ENCODE measurements at regions of chr1 and their contacts with region 1.

Region 1: DNA sequence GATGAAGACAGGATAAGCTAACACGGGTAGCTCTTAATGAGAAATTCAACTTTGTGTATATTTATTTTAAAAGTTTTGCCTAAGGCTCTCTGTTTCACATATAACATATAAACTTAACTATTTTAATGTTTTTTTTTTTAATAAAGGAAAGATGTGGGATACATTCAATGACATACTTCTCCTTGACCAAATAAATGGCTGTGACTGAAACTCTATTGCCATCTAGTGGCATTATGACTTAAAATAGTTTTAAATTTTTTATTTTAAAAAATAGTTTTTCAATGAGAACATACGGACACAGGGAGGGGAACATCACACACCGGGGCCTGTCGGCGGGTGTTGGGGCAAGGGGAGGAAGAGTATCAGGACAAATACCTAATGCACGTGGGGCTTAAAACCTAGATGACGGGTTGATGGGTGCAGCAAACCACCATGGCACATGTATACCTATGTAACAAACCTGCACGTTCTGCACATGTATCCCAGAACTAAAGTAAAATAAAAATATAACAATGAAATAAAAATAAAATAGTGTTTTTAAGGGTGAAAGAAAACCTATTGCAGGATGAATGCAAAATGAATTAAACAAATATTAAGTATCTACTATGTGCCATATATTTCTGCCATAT is 83.4 kb downstream of the LYST start:
- DNase-seq: peak; percentile 9 to 52
- H3K4me3 ChIP-seq: no peak overlapping the region
- H3K27ac ChIP-seq: no peak overlapping the region
- H3K4me1 ChIP-seq: 0 out of 2 replicates have a peak, but pooled peaks cover 4% of the 10 kb centered on the region
- H3K27me3 ChIP-seq: no peaks in the 10 kb centered on the region
- CTCF ChIP-seq: peak; percentile 71

Region 2: DNA sequence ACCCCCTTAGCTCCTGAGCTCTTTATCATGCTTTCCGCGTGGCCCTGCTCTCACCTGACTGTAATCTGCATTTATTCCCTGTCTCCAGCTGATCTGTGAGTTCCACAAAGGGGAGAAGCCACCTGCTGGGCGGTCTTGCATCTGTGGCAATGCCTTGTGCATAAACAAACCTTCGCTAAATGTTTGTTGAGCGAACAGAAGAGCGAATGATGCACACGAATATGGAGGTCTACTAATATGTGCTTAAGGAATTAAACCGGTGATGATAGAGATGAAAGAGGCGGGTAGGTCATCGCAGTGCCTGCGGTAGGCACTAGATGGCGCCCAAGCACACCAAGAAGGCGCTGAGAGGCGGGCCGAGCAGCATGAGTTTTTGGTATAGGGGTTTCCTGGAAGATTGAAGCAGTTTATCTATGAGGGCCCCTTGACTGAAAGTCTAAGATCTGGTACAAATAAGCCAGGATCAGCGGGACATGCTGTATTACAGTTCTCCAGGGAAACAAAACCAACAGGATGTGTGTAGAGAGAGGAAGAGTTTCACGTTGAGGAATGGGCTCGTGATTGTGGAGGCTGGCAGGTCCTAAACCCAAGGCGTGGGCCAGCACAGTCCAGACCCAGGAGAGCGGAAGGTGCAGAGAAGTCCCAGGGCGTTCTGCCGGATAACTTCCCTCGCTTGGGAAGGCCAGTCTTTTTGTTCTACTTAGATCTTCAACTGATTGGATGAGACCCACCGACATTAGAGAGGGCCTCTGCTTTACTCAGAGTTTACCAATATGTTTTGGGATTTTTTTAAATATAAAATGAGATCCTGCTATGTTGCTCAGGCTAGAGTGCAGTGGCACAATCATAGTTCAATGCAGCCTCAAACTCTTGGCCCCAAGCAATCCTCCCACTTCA is 689.3 kb before region 1 on chr1:
- CTCF ChIA-PET with region 1: no interaction called
- POLR2A ChIA-PET with region 1: no interaction called
- intact Hi-C with region 1: loop called (anchors 5 kb)
- DNase-seq: peak; percentile 50 to 79
- H3K4me3 ChIP-seq: no peak overlapping the region
- H3K27ac ChIP-seq: no peak overlapping the region
- H3K4me1 ChIP-seq: no peaks in the 10 kb centered on the region
- H3K27me3 ChIP-seq: no peaks in the 10 kb centered on the region
- CTCF ChIP-seq: peak; percentile 88

Region 3: GRCh38 chr1:235367000-235367908 is 416.0 kb before region 1 on chr1 and contains the start of gene TBCE:
- CTCF ChIA-PET with region 1: no interaction called
- POLR2A ChIA-PET with region 1: no interaction called
- intact Hi-C with region 1: no loop called
- DNase-seq: peak; percentile 98 to 99
- H3K4me3 ChIP-seq: peak within 1 kb of the TSS; percentile 82
- H3K27ac ChIP-seq: peak within 1 kb of the TSS; percentile 84
- H3K4me1 ChIP-seq: peaks cover 22% of the 10 kb centered on the region
- H3K27me3 ChIP-seq: no peaks in the 10 kb centered on the region
- CTCF ChIP-seq: no peak; the same call in 1 of the 2 replicates
- total RNA-seq, gene TBCE: 18.9 and 22.8 TPM in 2 replicates

Region 4: GRCh38 chr1:235495551-235495950 is 287.7 kb before region 1 on chr1:
- CTCF ChIA-PET with region 1: no interaction called
- POLR2A ChIA-PET with region 1: interaction called, 11 read pairs
- intact Hi-C with region 1: no loop called
- DNase-seq: no peak
- H3K4me3 ChIP-seq: no peak overlapping the region
- H3K27ac ChIP-seq: no peak overlapping the region
- H3K4me1 ChIP-seq: peaks cover 6% of the 10 kb centered on the region
- H3K27me3 ChIP-seq: no peaks in the 10 kb centered on the region
- CTCF ChIP-seq: no peak

Region 5: GRCh38 chr1:235597867-235598553 is 185.3 kb before region 1 on chr1:
- CTCF ChIA-PET with region 1: interaction called, 10 read pairs
- POLR2A ChIA-PET with region 1: no interaction called
- intact Hi-C with region 1: no loop called
- DNase-seq: peak; percentile 11 to 52
- H3K4me3 ChIP-seq: no peak overlapping the region
- H3K27ac ChIP-seq: no peak overlapping the region
- H3K4me1 ChIP-seq: no peaks in the 10 kb centered on the region
- H3K27me3 ChIP-seq: no peaks in the 10 kb centered on the region
- CTCF ChIP-seq: peak; percentile 60

Region 6: GRCh38 chr1:235767795-235768194 is 15.5 kb before region 1 on chr1:
- CTCF ChIA-PET with region 1: no interaction called
- POLR2A ChIA-PET with region 1: no interaction called
- intact Hi-C with region 1: no loop called
- DNase-seq: no peak
- H3K4me3 ChIP-seq: no peak overlapping the region
- H3K27ac ChIP-seq: no peak overlapping the region
- H3K4me1 ChIP-seq: no peaks in the 10 kb centered on the region
- H3K27me3 ChIP-seq: no peaks in the 10 kb centered on the region
- CTCF ChIP-seq: no peak

Region 7: GRCh38 chr1:235917267-235917811 is 134.1 kb after region 1 on chr1:
- CTCF ChIA-PET with region 1: no interaction called
- POLR2A ChIA-PET with region 1: interaction called, 3 read pairs
- intact Hi-C with region 1: loop called (anchors 10 kb)
- DNase-seq: peak; percentile 83 to 99
- H3K4me3 ChIP-seq: no peak overlapping the region
- H3K27ac ChIP-seq: peak overlapping the region; percentile 91
- H3K4me1 ChIP-seq: peaks cover 76% of the 10 kb centered on the region
- H3K27me3 ChIP-seq: no peaks in the 10 kb centered on the region
- CTCF ChIP-seq: no peak